Activated B cell treated with CpG ODN at 0.5 μM for 24 hours (primary cell): ENCODE measurements at regions of chr20 and their contacts with region 1.

Region 1: GRCh38 chr20:38446441-38447209 is 11.5 kb upstream of the SNHG17 start:
- DNase-seq: peak; percentile 93
- ATAC-seq: peak; percentile 88
- H3K4me3 Mint-ChIP-seq: peak overlapping the region; percentile 87
- H3K27ac Mint-ChIP-seq: peak overlapping the region; percentile 74
- H3K4me1 Mint-ChIP-seq: peaks cover 29% of the 10 kb centered on the region
- H3K27me3 Mint-ChIP-seq: peaks cover 7% of the 10 kb centered on the region
- CTCF ChIP-seq: peak; percentile 66

Region 2: GRCh38 chr20:38472513-38473372 is 26.1 kb after region 1 on chr20 and contains the start of gene RALGAPB:
- CTCF ChIA-PET with region 1: interaction called, 33 read pairs
- POLR2A ChIA-PET with region 1: interaction called, 45 read pairs
- intact Hi-C with region 1: loop called (anchors 1 kb)
- DNase-seq: peak; percentile 95
- ATAC-seq: peak; percentile 88
- H3K4me3 Mint-ChIP-seq: peak within 1 kb of the TSS; percentile 91
- H3K27ac Mint-ChIP-seq: peak within 1 kb of the TSS; percentile 85
- H3K4me1 Mint-ChIP-seq: peaks cover 44% of the 10 kb centered on the region
- H3K27me3 Mint-ChIP-seq: no peaks in the 10 kb centered on the region
- CTCF ChIP-seq: no peak
- total RNA-seq, gene RALGAPB: 40.2 and 48.3 TPM in 2 replicates